B cell (primary cell): ENCODE measurements at regions of chr19 and their contacts with region 1.

Region 1: DNA sequence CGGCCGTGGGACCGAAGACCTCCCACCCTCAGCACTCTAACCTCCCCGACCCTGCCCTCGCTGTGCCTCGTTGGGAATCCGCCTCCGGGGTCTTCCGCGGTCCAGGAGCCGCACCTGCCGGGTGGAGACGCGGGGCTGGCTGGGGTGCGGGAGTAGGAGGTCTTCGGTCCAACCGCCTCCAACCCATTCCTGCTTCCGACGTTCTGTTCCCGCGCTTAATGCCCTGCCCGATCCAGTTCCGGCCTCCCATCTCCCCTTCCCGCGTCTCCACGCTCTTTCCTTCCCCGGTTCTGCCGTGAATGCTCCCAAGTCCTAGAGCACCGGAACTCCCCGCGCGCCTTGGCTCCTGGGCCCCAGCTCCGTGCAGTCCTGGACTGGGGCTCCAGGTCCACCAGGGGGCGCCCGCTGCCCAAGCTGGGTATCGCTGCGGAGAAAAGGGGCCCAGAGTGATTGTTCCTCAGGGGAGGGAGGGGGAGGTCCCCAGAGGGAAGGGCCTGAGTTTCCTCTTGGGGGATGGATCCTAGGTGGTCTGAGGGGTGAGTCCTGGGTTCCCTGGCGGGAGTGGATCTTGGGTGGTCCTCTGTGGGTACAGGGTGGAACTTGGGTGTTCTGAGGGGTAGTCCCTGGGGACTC is 14.1 kb upstream of the TNFSF9 start:
- DNase-seq: peak; percentile 91
- ATAC-seq: peak; percentile 58
- H3K4me3 ChIP-seq: peak overlapping the region; percentile 31 to 74 (median 68)
- H3K4me3 Mint-ChIP-seq: peak overlapping the region; percentile 92
- H3K27ac ChIP-seq: peak overlapping the region in 1 of 2 donors; percentile 16
- H3K27ac Mint-ChIP-seq: peak overlapping the region; percentile 73
- H3K4me1 ChIP-seq: peaks cover 22 to 47% of the 10 kb centered on the region in 2 donors
- H3K4me1 Mint-ChIP-seq: peaks cover 38% of the 10 kb centered on the region
- H3K27me3 ChIP-seq: no peaks in the 10 kb centered on the region
- H3K27me3 Mint-ChIP-seq: no peaks in the 10 kb centered on the region
- CTCF ChIP-seq: peak; percentile 97

Region 2: GRCh38 chr19:6501740-6502648 is 14.8 kb before region 1 on chr19 and contains the start of gene TUBB4A:
- CTCF ChIA-PET with region 1: interaction called, 12 read pairs
- POLR2A ChIA-PET with region 1: no interaction called
- intact Hi-C with region 1: no loop called
- DNase-seq: peak; percentile 68
- ATAC-seq: peak; percentile 83
- H3K4me3 ChIP-seq: peak within 1 kb of the TSS in 4 of 5 experiments; percentile 47 to 67 (median 59)
- H3K4me3 Mint-ChIP-seq: peak within 1 kb of the TSS; percentile 92
- H3K27ac ChIP-seq: no peak within 1 kb of the TSS
- H3K27ac Mint-ChIP-seq: peak within 1 kb of the TSS; percentile 78
- H3K4me1 ChIP-seq: peaks cover 16 to 21% of the 10 kb centered on the region in 2 donors
- H3K4me1 Mint-ChIP-seq: peaks cover 18% of the 10 kb centered on the region
- H3K27me3 ChIP-seq: peaks cover 0 to 17% (median 3%) of the 10 kb centered on the region in 4 experiments
- H3K27me3 Mint-ChIP-seq: peaks cover 3% of the 10 kb centered on the region
- CTCF ChIP-seq: peak; percentile 13
- total RNA-seq, gene TUBB4A: 21.9 and 22.1 TPM in 2 replicates

Region 3: DNA sequence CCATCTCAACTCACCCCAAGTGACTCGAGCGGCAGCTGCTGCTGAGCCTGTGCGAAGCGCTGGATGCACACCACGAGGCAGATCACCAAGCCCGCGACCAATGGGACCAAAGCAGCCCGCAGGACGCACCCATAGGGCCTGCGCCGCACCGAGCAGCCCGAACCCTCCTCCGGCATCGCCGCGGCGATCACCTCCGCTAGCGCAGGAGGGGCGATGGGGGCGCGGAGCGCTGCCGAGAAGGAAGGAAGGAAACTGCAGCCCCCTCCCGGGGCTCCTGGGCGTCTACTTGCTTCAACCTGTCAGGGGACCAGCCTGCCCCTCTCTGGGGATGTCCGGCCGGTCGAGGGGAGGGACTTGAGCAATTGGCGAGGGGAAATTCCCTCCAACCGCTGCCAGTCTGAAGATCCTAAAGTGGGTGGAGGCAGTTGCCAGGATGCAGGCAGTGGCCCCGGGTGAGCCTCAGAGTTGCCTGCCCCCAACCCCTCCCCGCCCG is 74.1 kb after region 1 on chr19 and contains the start of gene CD70:
- CTCF ChIA-PET with region 1: interaction called, 17 read pairs
- POLR2A ChIA-PET with region 1: interaction called, 6 read pairs
- intact Hi-C with region 1: no loop called
- DNase-seq: peak; percentile 76
- ATAC-seq: peak; percentile 52
- H3K4me3 ChIP-seq: peak within 1 kb of the TSS in 4 of 5 experiments; percentile 16 to 60 (median 52)
- H3K4me3 Mint-ChIP-seq: peak within 1 kb of the TSS; percentile 99
- H3K27ac ChIP-seq: peak within 1 kb of the TSS in 1 of 2 donors; percentile 53
- H3K27ac Mint-ChIP-seq: peak within 1 kb of the TSS; percentile 93
- H3K4me1 ChIP-seq: peaks cover 55 to 56% of the 10 kb centered on the region in 2 donors
- H3K4me1 Mint-ChIP-seq: peaks cover 59% of the 10 kb centered on the region
- H3K27me3 ChIP-seq: peaks cover 0 to 45% (median 9%) of the 10 kb centered on the region in 4 experiments
- H3K27me3 Mint-ChIP-seq: peaks cover 32% of the 10 kb centered on the region
- CTCF ChIP-seq: no peak
- total RNA-seq, gene CD70: 48.5 and 49.1 TPM in 2 replicates

Region 4: DNA sequence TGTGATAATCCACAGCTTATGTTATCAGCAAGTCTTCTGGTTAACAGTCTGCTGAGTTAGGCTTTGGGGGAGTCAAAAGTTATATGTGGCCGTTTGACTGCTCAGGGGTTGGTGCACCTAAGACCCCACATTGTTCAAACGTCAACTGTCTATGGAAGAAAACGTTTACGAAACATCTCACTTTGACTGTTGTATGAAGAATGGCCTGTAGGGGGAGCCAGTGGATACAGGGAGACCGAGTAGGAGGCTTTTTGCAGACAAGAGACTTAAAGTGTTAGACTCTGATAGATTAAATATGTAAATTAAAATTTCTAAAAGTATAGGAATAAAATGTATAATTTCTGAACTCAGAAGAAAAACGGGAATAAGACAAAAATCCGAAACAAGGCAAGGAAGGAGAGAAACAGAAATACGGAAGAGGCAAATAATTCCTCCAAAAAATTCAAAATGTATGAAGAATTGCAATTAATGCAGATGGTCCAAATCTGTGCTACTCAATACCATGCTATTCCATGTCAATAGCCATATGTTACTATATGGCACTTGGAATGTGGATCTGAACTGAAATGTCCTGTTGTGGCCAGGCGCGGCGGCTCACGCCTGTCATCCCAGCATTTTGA is 115.3 kb after region 1 on chr19:
- CTCF ChIA-PET with region 1: interaction called, 49 read pairs
- POLR2A ChIA-PET with region 1: interaction called, 13 read pairs
- intact Hi-C with region 1: loop called (anchors 1 kb)
- DNase-seq: peak; percentile 87
- ATAC-seq: peak; percentile 78
- H3K4me3 ChIP-seq: no peak overlapping the region
- H3K4me3 Mint-ChIP-seq: no peak overlapping the region
- H3K27ac ChIP-seq: no peak overlapping the region
- H3K27ac Mint-ChIP-seq: no peak overlapping the region
- H3K4me1 ChIP-seq: peaks cover 5 to 8% of the 10 kb centered on the region in 2 donors
- H3K4me1 Mint-ChIP-seq: peaks cover 26% of the 10 kb centered on the region
- H3K27me3 ChIP-seq: no peaks in the 10 kb centered on the region
- H3K27me3 Mint-ChIP-seq: peaks cover 3% of the 10 kb centered on the region
- CTCF ChIP-seq: peak; percentile 92

Region 5: DNA sequence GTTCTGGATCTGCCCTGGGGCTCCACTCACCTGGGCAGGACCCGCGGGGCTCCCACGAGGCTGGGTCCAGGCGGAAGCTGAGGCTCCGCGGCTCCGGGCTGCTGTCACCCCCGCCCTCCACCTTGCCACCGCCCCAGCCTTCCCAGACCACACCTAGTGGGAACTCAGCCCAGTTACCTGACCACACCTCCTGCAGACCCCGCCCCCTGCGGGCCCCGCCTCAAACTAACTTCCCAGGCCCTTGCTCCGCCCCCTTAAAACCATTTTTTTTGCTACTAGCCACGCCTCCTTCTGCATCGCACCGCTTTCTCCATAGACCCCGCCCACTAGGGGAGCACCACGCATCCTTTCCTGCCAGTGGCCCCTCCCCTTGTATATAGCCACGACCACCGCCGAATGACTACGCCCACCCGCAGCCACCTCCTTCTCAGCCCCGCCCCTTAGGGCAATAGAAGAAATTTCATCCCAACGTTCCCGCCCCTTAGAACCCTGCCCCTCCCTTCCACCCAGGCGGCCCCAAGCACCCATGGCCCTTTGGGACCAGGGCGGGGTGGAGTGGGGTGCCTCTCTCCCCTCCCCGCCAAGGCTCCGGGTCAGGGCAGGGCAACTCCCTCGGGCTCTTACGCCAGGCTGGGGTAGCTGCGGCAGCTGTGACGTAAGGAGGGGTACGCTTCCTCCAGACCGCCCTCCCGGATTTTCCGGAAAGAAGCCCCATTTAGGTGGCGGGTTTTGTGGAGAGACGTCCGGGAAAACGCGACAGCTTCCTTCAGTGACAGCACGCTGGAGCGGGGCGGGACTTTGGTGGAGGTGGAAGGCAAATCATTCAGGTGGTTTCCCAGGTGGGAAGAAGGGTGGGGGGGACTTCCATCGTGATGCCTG is 250.8 kb after region 1 on chr19 and contains the start of gene SH2D3A:
- CTCF ChIA-PET with region 1: interaction called, 3 read pairs
- POLR2A ChIA-PET with region 1: interaction called, 5 read pairs
- intact Hi-C with region 1: loop called (anchors 2 kb)
- DNase-seq: peak; percentile 98
- ATAC-seq: peak; percentile 69
- H3K4me3 ChIP-seq: peak within 1 kb of the TSS; percentile 36 to 81 (median 68)
- H3K4me3 Mint-ChIP-seq: peak within 1 kb of the TSS; percentile 93
- H3K27ac ChIP-seq: peak within 1 kb of the TSS; percentile 89 to 96
- H3K27ac Mint-ChIP-seq: peak within 1 kb of the TSS; percentile 95
- H3K4me1 ChIP-seq: peaks cover 28 to 46% of the 10 kb centered on the region in 2 donors
- H3K4me1 Mint-ChIP-seq: peaks cover 47% of the 10 kb centered on the region
- H3K27me3 ChIP-seq: no peaks in the 10 kb centered on the region
- H3K27me3 Mint-ChIP-seq: no peaks in the 10 kb centered on the region
- CTCF ChIP-seq: no peak
- total RNA-seq, gene SH2D3A: 33.5 and 36.1 TPM in 2 replicates